GM12878 (cell line): ENCODE measurements at regions of chr7 and their contacts with region 1.

Region 1: DNA sequence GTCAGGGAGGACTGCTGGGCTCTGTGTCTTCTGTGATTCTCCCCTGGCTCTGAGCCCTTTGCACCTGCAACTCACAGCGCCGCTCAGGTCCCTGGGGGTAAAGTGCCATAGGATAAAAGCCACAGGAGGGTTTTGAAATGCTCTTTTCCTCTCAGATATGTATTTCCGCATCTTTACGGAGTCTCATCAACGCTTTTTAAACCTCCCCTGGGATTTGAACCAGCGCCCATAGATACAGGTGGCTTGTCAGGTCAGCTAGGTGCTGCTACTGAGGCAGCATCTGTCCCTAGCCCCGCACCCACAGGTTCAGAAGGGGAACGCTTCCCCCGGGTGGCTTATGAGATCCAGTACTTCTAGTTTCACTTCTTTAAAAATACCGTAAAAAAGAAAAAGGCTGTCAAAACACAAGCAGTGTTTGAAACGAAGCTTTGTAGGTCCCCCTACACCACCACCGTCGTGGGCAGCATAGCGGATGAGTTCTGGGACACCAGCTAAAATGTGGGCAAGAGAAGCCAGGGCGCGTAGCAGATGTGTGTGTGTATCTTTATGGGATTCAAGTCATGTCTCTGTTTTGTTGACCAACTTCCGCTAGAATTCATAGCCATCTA is 173.5 kb downstream of the CUX1 start:
- DNase-seq: peak; percentile 88
- ATAC-seq: peak; percentile 87
- H3K4me3 ChIP-seq: peak overlapping the region; percentile 50
- H3K27ac ChIP-seq: peak overlapping the region; percentile 93
- H3K4me1 ChIP-seq: peaks cover 74% of the 10 kb centered on the region
- H3K27me3 ChIP-seq: no peaks in the 10 kb centered on the region
- CTCF ChIP-seq: peak; percentile 2 to 7 (median 3); a peak in 1 of 6 replicates
- EP300 ChIP-seq: peak; percentile 85 to 87
- POLR2A ChIP-seq: peak; percentile 43; the same call in 1 of the 2 replicates
- RAD21 ChIP-seq: peak; percentile 43; the same call in 1 of the 2 replicates

Region 2: DNA sequence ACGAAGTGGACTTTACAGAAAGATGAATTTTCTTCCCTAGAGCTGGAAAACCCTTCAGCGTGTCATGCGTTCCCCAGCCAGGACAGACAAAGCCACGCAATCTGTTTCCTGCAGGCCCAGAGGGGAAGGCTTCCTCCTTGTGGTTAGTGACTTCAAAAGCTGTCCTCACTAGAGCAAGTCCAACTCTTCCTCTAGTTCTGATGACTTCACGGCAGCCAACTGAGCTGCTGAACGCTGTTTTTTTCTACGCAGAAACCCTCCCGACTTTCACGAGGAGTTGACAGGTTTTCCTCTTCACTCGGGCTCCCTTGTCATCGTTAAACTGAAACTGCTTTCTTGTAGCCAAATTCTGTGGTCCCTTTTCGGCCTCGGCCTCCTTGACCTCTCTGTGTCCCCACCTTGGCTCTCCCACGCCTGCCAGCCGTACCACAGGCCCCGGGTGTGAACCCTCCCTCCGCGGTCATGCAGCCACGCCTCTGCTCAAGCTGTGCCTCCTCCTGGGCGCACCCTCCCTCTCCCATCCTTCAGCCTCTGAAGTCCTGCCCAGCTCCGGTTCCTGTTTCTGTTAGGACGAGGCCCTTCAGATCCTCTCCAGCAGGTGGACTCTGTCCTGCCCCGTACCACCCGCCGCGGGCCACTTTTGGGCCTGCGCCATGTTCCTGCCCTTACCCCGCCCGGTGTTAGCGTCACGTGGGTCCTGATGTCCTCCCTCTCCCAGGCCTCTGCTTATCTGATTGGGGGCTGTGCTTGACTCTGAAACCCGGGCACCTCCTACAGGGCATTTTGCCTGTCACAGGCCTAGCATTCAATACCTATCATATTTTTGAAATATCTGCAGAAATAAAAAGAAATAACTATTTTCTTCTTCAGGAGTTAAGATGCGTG is 134.2 kb before region 1 on chr7:
- CTCF ChIA-PET with region 1: interaction called, 9 read pairs
- POLR2A ChIA-PET with region 1: interaction called, 3 read pairs
- RAD21 ChIA-PET with region 1: interaction called, 36 read pairs
- SMC1A ChIA-PET with region 1: interaction called, 25 read pairs
- in situ Hi-C with region 1: no loop called
- intact Hi-C with region 1: loop called (anchors 2 kb)
- DNase-seq: peak; percentile 95
- ATAC-seq: peak; percentile 96
- H3K4me3 ChIP-seq: peak overlapping the region; percentile 33; the same call in 1 of the 2 replicates
- H3K27ac ChIP-seq: peak overlapping the region; percentile 84
- H3K4me1 ChIP-seq: peaks cover 47% of the 10 kb centered on the region
- H3K27me3 ChIP-seq: no peaks in the 10 kb centered on the region
- CTCF ChIP-seq: peak; percentile 31 to 53 (median 39); a peak in 5 of 6 replicates
- EP300 ChIP-seq: peak in 1 of 2 experiments; percentile 72; a peak in 1 of 4 replicates
- POLR2A ChIP-seq: peak; percentile 58
- RAD21 ChIP-seq: peak; percentile 29; the same call in 1 of the 2 replicates

Region 3: DNA sequence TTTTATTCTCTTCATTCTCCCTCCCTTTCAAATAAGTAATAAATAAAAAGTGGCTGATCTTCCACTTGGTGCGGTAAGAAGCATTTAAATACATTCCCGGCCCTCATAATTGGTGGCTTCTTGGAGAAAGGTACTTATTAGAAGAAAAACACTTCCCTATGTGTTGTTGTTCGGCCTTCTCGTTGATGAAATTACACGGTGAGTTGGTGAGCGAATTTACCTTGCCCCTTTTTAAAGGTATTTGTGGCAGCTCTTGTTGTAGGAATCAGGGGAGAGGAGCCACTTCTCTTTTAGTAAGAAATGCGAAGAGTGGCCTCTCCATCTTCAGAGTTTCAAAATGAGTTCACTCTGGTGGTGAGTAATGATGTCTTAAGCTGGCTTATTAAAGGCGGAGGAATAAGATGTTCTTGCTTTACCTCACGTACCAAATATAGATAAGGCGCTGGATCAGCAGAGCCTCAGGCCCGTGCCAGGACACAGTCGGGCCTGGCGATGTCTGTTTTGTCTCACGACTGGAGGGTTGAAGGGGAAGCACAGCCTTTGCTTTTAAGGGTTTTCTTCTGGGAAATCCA is 37.6 kb before region 1 on chr7:
- CTCF ChIA-PET with region 1: interaction called, 7 read pairs
- POLR2A ChIA-PET with region 1: interaction called, 27 read pairs
- RAD21 ChIA-PET with region 1: interaction called, 28 read pairs
- SMC1A ChIA-PET with region 1: interaction called, 18 read pairs
- in situ Hi-C with region 1: no loop called
- intact Hi-C with region 1: no loop called
- DNase-seq: peak; percentile 48
- ATAC-seq: peak; percentile 82
- H3K4me3 ChIP-seq: no peak overlapping the region
- H3K27ac ChIP-seq: peak overlapping the region; percentile 33
- H3K4me1 ChIP-seq: peaks cover 46% of the 10 kb centered on the region
- H3K27me3 ChIP-seq: no peaks in the 10 kb centered on the region
- CTCF ChIP-seq: no peak
- EP300 ChIP-seq: no peak
- POLR2A ChIP-seq: no peak
- RAD21 ChIP-seq: 0 out of 2 replicates have a peak, but pooled peaks have one; percentile 6

Region 4: DNA sequence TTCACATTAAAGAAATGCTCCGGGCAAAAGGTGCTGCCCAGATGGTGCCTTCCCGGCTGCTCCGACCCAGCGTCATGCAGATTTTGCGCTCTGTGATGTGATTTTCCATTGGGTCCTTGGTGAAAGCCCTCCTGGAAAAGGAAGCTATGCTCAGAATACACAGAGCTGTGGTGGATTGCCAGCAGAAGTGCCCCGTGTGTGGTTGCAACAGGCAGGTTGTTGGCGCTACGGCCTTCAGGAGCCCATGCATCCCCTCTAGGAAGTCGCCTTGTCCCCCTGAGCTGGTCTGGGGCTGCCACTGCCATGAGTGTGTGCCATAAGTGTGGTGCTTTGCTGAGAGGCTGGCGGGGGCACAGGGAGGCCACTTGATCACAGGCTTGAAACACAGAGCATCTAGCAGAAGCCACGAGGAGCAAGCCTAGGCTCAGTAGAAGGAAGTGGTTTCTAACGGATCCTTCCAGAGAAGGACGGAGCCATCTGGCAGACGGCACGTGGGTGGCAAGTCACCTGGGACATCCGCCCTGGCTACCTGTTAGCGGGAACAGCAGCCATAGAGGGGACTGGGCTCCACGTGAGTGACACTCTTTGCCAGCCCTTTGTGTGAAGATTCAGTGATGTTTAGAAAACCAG is 37.4 kb after region 1 on chr7:
- CTCF ChIA-PET with region 1: interaction called, 3 read pairs
- POLR2A ChIA-PET with region 1: interaction called, 4 read pairs
- RAD21 ChIA-PET with region 1: interaction called, 20 read pairs
- SMC1A ChIA-PET with region 1: interaction called, 5 read pairs
- in situ Hi-C with region 1: no loop called
- intact Hi-C with region 1: loop called (anchors 5 kb)
- DNase-seq: no peak
- ATAC-seq: no peak
- H3K4me3 ChIP-seq: no peak overlapping the region
- H3K27ac ChIP-seq: no peak overlapping the region; the same call in 1 of the 2 replicates
- H3K4me1 ChIP-seq: peaks cover 26% of the 10 kb centered on the region
- H3K27me3 ChIP-seq: no peaks in the 10 kb centered on the region
- CTCF ChIP-seq: no peak
- EP300 ChIP-seq: no peak
- POLR2A ChIP-seq: no peak
- RAD21 ChIP-seq: no peak

Region 5: GRCh38 chr7:102061981-102062390 is 71.1 kb after region 1 on chr7:
- CTCF ChIA-PET with region 1: no interaction called
- POLR2A ChIA-PET with region 1: interaction called, 4 read pairs
- RAD21 ChIA-PET with region 1: interaction called, 17 read pairs
- SMC1A ChIA-PET with region 1: interaction called, 22 read pairs
- in situ Hi-C with region 1: no loop called
- intact Hi-C with region 1: no loop called
- DNase-seq: peak; percentile 82
- ATAC-seq: peak; percentile 99
- H3K4me3 ChIP-seq: no peak overlapping the region; the same call in 1 of the 2 replicates
- H3K27ac ChIP-seq: peak overlapping the region; percentile 65
- H3K4me1 ChIP-seq: peaks cover 35% of the 10 kb centered on the region
- H3K27me3 ChIP-seq: no peaks in the 10 kb centered on the region
- CTCF ChIP-seq: no peak
- EP300 ChIP-seq: peak; percentile 76 to 83; a peak in 3 of 4 replicates
- POLR2A ChIP-seq: peak; percentile 37; the same call in 1 of the 2 replicates
- RAD21 ChIP-seq: no peak

Region 6: GRCh38 chr7:102079140-102080018 is 88.5 kb after region 1 on chr7:
- CTCF ChIA-PET with region 1: no interaction called
- POLR2A ChIA-PET with region 1: no interaction called
- RAD21 ChIA-PET with region 1: no interaction called
- SMC1A ChIA-PET with region 1: no interaction called
- in situ Hi-C with region 1: no loop called
- intact Hi-C with region 1: no loop called
- DNase-seq: no peak
- ATAC-seq: no peak
- H3K4me3 ChIP-seq: no peak overlapping the region
- H3K27ac ChIP-seq: no peak overlapping the region
- H3K4me1 ChIP-seq: peaks cover 4% of the 10 kb centered on the region
- H3K27me3 ChIP-seq: no peaks in the 10 kb centered on the region
- CTCF ChIP-seq: no peak
- EP300 ChIP-seq: no peak
- POLR2A ChIP-seq: no peak
- RAD21 ChIP-seq: no peak

Region 7: DNA sequence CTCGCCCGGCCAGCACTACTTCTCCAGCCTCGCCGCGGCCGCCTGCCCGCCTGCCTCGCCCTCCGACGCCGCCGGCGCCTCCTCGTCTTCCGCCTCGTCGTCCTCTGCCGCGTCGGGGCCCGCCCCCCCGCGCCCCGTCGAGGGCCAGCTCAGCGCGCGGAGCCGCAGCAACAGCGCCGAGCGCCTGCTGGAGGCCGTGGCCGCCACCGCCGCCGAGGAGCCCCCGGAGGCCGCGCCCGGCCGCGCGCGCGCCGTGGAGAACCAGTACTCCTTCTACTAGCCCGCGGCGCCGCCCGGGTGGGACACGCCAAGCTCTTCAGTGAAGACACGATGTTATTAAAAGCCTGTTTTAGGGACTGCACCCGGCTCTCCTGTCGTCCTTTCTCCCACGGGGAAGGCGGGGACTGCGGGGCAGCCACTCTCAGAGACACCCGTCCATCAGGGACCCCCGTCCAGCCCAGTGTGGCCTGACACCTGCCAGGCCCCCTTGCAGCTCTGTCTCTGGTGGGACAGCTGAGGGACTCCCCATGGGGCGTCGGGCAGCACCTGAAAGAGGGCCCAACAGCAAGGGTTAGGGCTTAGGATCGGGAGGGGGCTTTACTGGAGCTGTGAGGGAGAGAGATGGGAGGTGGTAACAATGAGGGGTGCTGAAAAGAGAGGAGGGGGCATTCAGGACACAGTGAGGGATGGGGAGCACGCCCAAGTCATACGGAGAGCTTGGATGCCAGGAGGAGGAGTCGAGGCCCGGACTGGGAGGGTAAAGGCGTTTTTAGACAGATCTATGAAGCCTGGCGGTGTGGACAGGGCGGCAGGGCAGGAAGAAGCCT is 330.6 kb after region 1 on chr7:
- CTCF ChIA-PET with region 1: no interaction called
- POLR2A ChIA-PET with region 1: no interaction called
- RAD21 ChIA-PET with region 1: no interaction called
- SMC1A ChIA-PET with region 1: no interaction called
- in situ Hi-C with region 1: no loop called
- intact Hi-C with region 1: no loop called
- DNase-seq: no peak
- ATAC-seq: no peak
- H3K4me3 ChIP-seq: no peak overlapping the region
- H3K27ac ChIP-seq: no peak overlapping the region
- H3K4me1 ChIP-seq: no peaks in the 10 kb centered on the region
- H3K27me3 ChIP-seq: no peaks in the 10 kb centered on the region
- CTCF ChIP-seq: no peak
- EP300 ChIP-seq: no peak
- POLR2A ChIP-seq: peak; percentile 56
- RAD21 ChIP-seq: no peak